ENCODE measurements at regions of chr14 and their contacts with region 1.

Region 1: DNA sequence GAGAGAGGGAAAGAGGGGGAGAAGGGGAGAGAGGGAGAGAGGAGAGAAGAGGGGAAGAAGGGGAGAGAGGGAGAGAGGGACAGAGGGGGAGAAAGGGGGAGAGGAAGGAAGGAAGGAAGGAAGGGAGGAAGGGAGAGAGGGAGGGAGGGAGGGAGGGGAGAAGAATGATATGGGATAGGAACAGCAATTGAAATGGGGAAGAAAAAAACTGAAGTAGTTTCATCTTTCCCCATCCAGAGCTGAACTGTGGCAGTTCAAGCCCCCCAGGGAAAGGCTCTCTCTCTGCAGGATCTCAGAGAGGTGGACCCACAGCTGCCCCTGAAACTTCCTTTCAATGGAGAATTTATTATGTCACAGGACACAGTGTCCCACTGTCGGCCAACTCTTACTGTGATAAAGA is 136.9 kb downstream of the DPF3 start:
- DNase-seq: no peak
- ATAC-seq: no peak
- H3K4me3 ChIP-seq: no peak overlapping the region
- H3K4me3 Mint-ChIP-seq: no peak overlapping the region
- H3K27ac ChIP-seq: no peak overlapping the region
- H3K27ac Mint-ChIP-seq: no peak overlapping the region
- H3K4me1 ChIP-seq: no peaks in the 10 kb centered on the region
- H3K4me1 Mint-ChIP-seq: no peaks in the 10 kb centered on the region
- H3K27me3 ChIP-seq: peaks cover 0 to 24% of the 10 kb centered on the region in 2 experiments
- H3K27me3 Mint-ChIP-seq: peaks cover 0 to 8% of the 10 kb centered on the region in 2 donors

Region 2: DNA sequence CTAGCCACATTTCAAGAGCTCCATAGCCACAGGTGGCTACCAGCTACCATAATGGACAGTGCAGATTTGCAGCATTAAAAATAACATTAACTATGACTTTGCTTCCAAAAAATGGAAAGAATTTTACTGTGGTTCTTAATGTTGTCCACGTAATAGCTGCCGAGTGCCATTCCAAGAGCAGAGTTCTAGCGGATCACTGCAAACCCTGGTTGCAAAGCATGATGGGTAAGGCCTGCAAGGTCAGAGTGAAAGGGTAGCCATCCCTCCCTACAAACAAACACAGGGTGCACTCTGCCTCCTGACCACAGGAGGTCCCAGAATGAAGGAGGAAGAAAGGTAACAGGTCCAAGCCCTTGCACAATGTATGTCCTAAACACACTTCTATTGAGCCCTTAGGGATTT is 20.7 kb before region 1 on chr14:
- CTCF ChIA-PET with region 1: no interaction called
- POLR2A ChIA-PET with region 1: interaction called in 1 of 2 experiments, 10 read pairs
- DNase-seq: no peak
- ATAC-seq: no peak
- H3K4me3 ChIP-seq: no peak overlapping the region
- H3K4me3 Mint-ChIP-seq: no peak overlapping the region
- H3K27ac ChIP-seq: no peak overlapping the region
- H3K27ac Mint-ChIP-seq: no peak overlapping the region
- H3K4me1 ChIP-seq: no peaks in the 10 kb centered on the region
- H3K4me1 Mint-ChIP-seq: no peaks in the 10 kb centered on the region
- H3K27me3 ChIP-seq: peaks cover 0 to 8% of the 10 kb centered on the region in 2 experiments
- H3K27me3 Mint-ChIP-seq: peaks cover 0 to 4% of the 10 kb centered on the region in 2 donors